MCF 10A (cell line): ENCODE measurements at regions of chr10 and their contacts with region 1.

Region 1: GRCh38 chr10:84147347-84147746 is 8.0 kb downstream of the GHITM start:
- DNase-seq: no peak
- H3K4me3 Mint-ChIP-seq: no peak overlapping the region
- H3K27ac Mint-ChIP-seq: no peak overlapping the region
- H3K4me1 Mint-ChIP-seq: peaks cover 6% of the 10 kb centered on the region
- H3K27me3 Mint-ChIP-seq: no peaks in the 10 kb centered on the region
- CTCF ChIP-seq: no peak

Region 2: DNA sequence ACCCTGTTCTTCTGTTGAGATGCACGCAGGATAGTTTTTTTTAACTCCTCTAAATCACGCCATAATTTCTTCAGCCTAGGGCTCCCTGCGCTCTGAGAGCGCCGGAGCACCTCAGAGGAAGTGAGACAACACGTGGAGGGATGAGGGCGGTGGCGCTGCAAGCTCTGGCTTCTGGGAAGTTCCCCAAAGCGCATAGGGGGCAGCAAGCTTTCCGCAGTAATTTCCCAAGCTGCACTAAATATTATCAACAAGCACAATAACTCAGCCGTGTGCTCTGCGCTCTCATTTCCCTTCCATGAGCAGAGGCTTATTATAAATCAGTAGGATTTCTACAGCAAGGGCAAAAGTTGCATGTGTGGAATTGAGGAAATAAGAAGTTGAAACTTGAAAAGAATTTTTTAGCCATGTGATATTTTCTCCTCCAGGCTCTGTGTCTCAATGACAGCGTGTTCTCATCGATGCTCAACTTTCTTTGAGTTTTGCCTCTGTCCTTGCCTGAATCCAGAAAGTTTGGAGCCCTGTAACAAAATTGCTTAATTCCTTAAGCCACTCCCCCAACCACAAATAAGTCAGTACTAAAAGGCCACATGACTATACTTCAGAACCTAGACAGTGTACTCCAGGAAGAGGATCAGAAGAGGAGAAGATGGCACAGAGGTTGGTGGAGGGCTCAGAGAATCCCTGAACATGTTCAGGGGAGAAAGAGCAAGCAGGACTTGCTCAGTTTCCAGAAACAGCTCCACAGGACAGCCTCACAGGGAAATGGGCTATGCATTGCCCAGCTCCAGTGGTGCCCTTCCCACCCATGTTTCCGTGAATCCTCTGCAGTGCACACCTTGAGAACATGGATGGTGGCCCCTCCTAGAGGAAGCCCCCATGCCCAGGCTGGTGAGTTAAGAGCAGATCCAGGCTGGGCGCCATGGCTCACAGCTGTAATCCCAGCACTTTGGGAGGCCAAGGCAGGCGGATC is 229.5 kb before region 1 on chr10:
- CTCF ChIA-PET with region 1: no interaction called
- POLR2A ChIA-PET with region 1: no interaction called
- intact Hi-C with region 1: no loop called
- DNase-seq: no peak
- H3K4me3 Mint-ChIP-seq: no peak overlapping the region
- H3K27ac Mint-ChIP-seq: no peak overlapping the region
- H3K4me1 Mint-ChIP-seq: no peaks in the 10 kb centered on the region
- H3K27me3 Mint-ChIP-seq: no peaks in the 10 kb centered on the region
- CTCF ChIP-seq: no peak

Region 3: DNA sequence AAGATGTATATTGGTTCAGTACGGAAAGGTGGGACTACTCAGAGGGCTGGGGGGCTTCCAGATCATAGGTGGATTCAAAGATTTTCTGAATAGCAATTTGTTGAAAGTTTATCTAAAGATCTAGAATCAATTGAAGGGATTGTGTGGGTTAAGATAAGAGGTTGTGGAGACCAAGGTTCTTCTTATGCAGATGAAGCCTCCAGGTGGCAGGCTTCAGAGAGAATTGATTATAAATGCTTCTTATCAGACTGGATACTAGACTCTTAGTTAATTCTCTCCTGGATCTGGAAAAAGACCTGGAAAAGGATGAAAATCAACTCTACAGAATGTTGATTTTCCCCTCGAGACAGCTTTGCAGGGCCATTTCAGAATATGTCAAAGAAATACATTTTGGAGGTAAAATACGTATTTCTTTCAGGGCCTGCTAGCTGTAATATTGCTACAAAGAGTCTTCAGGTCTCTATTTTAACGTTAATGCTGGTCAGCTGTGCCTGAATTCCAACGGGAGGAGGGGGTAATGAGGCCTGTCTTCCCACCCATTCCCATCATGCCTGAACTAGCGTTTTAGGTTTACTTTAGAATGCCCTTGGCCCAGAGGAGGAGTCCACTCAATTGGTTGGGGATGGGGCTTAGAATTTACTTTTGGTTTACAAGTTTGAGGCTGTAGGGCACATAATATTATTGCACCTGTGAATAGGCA is 13.5 kb after region 1 on chr10:
- CTCF ChIA-PET with region 1: interaction called, 23 read pairs
- POLR2A ChIA-PET with region 1: interaction called, 7 read pairs
- intact Hi-C with region 1: no loop called
- DNase-seq: no peak
- H3K4me3 Mint-ChIP-seq: no peak overlapping the region
- H3K27ac Mint-ChIP-seq: no peak overlapping the region
- H3K4me1 Mint-ChIP-seq: peaks cover 11% of the 10 kb centered on the region
- H3K27me3 Mint-ChIP-seq: no peaks in the 10 kb centered on the region
- CTCF ChIP-seq: no peak

Region 4: DNA sequence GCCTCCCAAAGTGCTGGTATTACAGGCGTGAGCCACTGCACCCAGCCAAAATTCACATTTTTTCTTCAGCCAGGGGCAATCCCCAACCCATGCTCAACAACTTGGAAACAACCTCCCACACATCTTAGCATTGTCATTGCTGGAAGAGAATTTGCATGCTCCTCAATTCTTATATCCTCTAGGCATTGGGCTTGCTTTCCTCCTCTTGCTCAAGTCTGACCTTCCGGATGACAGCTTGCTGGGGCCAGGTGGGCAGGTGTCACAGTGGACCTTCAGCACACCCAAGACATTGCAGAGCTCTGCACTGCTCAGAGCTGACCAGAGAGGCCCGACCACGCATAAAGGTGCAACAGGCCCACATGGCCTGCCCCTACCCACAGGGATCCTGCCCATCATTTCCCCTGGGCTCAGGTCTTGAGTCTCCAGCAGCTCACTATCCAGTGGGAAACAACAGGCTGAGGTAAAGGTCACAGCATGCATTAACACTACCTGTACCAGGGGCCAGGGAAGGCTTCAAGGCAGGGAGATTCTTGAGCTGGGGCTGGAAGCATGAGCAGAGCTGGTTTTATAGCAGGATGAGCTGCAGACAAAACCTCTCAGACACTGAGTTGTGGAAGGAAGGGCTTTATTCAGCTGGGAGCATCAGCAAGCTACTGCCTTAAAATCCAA is 19.4 kb after region 1 on chr10:
- CTCF ChIA-PET with region 1: interaction called, 23 read pairs
- POLR2A ChIA-PET with region 1: no interaction called
- intact Hi-C with region 1: no loop called
- DNase-seq: no peak
- H3K4me3 Mint-ChIP-seq: no peak overlapping the region
- H3K27ac Mint-ChIP-seq: no peak overlapping the region
- H3K4me1 Mint-ChIP-seq: peaks cover 6% of the 10 kb centered on the region
- H3K27me3 Mint-ChIP-seq: no peaks in the 10 kb centered on the region
- CTCF ChIP-seq: no peak

Region 5: DNA sequence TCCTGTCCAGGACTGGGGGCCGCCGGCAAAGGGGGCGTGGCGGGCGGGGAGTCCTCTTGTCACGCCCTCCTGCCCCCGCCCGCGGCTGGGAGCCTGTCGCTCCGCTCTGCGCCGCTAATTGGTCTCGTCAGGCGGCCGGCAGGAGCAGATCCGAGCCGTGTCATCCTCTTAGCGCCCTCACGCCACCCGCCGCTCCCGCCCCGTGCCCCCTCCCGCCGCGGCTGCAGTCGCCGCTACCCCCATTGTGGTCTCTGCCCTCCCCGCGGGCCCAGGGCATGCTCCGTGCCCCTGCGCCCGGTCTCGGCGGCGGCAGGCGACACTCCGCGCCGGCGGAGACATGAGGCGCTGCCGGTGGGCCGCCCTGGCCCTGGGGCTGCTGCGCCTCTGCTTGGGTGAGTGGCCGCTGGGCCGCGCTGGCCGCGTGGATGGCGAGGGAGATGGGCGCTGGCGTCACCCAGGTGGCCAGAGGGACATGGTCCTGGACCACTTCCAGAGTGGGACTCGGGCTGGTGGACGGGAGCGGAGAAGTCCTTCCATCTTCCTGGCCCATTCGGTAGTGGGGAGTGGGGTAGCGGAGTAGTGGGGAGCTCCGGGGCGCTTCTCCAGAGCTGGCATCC is 47.2 kb after region 1 on chr10 and contains the start of gene CDHR1:
- CTCF ChIA-PET with region 1: interaction called, 11 read pairs
- POLR2A ChIA-PET with region 1: no interaction called
- intact Hi-C with region 1: no loop called
- DNase-seq: no peak
- H3K4me3 Mint-ChIP-seq: no peak within 1 kb of the TSS
- H3K27ac Mint-ChIP-seq: no peak within 1 kb of the TSS
- H3K4me1 Mint-ChIP-seq: peaks cover 7% of the 10 kb centered on the region
- H3K27me3 Mint-ChIP-seq: peaks cover 35% of the 10 kb centered on the region
- CTCF ChIP-seq: no peak
- total RNA-seq, gene CDHR1: not detected in 2 replicates

Region 6: DNA sequence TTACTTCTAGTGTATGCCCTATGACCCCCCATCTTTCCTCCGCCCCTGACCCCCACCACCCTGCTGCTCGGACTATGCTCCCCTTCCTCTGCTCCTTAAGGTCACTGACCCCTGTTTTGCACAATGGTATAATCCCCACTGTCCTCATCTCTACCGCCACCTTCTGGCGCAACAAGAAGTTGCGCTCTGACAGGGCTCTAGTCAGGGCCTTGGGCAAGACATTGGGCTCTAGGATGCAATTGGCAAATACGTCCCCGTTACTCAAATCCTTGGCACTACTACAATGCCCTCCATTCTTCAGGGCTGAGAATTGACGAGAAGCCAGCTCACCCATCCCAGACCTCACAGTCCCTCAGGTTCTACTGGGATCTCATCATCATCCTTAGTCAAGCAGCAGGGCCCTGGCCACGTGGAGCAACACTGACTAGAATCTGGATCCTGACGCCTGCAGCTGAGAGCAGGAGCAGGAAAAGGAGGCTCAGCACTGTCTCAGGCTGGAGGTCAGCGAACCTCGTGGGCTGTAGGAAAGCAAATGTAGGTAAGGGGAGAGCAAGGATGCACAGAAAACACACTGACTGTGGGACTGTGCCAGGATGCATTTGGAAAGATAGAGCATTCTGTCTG is 67.4 kb after region 1 on chr10:
- CTCF ChIA-PET with region 1: interaction called, 16 read pairs
- POLR2A ChIA-PET with region 1: interaction called, 5 read pairs
- intact Hi-C with region 1: no loop called
- DNase-seq: peak; percentile 56
- H3K4me3 Mint-ChIP-seq: no peak overlapping the region
- H3K27ac Mint-ChIP-seq: no peak overlapping the region
- H3K4me1 Mint-ChIP-seq: no peaks in the 10 kb centered on the region
- H3K27me3 Mint-ChIP-seq: peaks cover 25% of the 10 kb centered on the region
- CTCF ChIP-seq: peak; percentile 26

Region 7: DNA sequence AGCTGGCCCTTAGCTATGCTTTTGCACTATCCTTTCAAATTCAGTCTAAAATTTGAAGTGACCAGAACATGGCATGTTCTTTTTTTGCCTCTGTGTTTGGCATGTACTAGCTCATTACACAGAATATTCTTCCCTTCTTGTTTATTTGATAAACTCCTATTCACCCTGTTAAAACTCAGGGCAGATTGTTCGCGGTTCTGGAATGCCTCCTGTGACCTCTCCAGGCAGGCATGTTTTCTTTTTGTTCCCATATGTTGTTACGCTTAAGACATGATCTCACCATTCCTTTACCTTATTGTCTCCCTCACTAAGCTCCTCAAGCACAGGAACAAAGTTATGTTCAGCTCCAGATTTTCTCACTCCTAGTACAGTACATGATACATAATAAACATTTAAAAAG is 362.8 kb after region 1 on chr10:
- CTCF ChIA-PET with region 1: no interaction called
- POLR2A ChIA-PET with region 1: no interaction called
- intact Hi-C with region 1: no loop called
- DNase-seq: peak; percentile 8
- H3K4me3 Mint-ChIP-seq: no peak overlapping the region
- H3K27ac Mint-ChIP-seq: peak overlapping the region; percentile 4
- H3K4me1 Mint-ChIP-seq: peaks cover 10% of the 10 kb centered on the region
- H3K27me3 Mint-ChIP-seq: no peaks in the 10 kb centered on the region
- CTCF ChIP-seq: no peak